ENCODE measurements at regions of chr1 and their contacts with region 1.

Region 1: DNA sequence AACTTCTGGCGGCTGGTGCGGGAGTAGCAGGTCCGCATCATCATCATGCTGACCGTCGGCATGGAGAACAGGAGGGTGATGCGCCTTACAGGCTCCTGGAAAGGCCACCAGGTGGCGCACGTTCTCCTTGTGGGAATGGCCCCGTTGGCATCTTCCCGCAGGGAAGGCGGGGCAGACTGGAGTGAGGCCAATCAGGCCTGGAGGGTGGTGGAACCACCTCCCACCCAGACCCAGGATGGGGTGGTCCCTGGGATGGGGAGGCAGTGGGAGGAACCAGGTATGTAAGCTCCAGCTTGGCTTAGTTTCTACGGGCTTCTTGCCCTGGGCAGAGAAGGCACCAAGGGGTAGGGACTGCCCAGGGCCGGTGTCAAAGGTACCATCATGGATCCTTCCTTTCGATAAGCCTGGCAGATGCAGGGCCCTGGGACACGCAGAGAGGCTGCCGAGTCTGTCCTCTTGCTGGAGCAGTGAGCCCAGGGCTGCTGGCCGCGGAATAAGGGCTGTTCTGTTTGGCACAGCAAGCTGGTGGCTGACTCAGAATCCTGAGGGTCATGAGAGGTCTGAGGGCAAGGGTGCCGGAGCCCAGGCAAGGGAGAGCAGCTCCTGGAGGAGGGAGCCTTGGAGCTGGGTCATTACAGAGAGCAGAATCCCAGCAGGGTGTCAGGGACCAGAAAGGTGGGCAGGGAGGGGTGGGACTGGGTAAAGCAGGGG is 8.7 kb upstream of the LGR6 start:
- DNase-seq: peak; percentile 57 to 62
- H3K4me3 ChIP-seq: no peak overlapping the region
- H3K27ac ChIP-seq: no peak overlapping the region
- H3K4me1 ChIP-seq: no peaks in the 10 kb centered on the region
- H3K27me3 ChIP-seq: no peaks in the 10 kb centered on the region
- CTCF ChIP-seq: peak; percentile 51 to 64 (median 56)
- POLR2A ChIP-seq: no peak

Region 2: GRCh38 chr1:201982623-201983379 is 202.1 kb before region 1 on chr1 and contains the start of gene RNPEP:
- intact Hi-C with region 1: no loop called
- DNase-seq: peak; percentile 77 to 80
- H3K4me3 ChIP-seq: peak within 1 kb of the TSS; percentile 72 to 100
- H3K27ac ChIP-seq: peak within 1 kb of the TSS; percentile 92 to 98
- H3K4me1 ChIP-seq: no peaks in the 10 kb centered on the region
- H3K27me3 ChIP-seq: no peaks in the 10 kb centered on the region
- CTCF ChIP-seq: peak in 2 of 4 experiments; percentile 27 to 31
- POLR2A ChIP-seq: peak; percentile 62 to 86
- total RNA-seq, gene RNPEP: 17.9 to 64.8 (median 41.7) TPM

Region 3: DNA sequence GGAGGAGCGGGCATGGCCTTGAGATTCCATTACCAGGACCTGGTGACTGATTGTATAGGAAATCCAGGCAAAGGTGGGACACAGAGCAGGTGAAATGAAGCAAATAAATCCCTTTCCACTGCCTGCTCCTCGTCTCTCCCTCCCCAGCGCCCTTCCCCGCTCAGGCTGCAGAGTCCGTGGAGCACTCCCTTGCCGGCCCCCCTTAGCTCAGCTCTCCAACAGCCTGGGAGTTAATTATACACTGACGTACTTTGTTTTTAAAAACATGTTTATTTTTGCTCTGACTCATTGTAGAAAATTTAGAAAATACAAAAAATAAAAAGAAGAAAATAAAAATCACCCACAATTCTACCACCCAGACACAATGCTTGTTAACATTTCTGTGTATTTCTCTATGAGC is 70.4 kb after region 1 on chr1:
- intact Hi-C with region 1: no loop called
- DNase-seq: no peak
- H3K4me3 ChIP-seq: no peak overlapping the region
- H3K27ac ChIP-seq: no peak overlapping the region
- H3K4me1 ChIP-seq: no peaks in the 10 kb centered on the region
- H3K27me3 ChIP-seq: no peaks in the 10 kb centered on the region
- CTCF ChIP-seq: no peak
- POLR2A ChIP-seq: no peak

Region 4: GRCh38 chr1:202716654-202717053 is 531.7 kb after region 1 on chr1:
- intact Hi-C with region 1: loop called (anchors 5 kb)
- DNase-seq: no peak
- H3K4me3 ChIP-seq: no peak overlapping the region
- H3K27ac ChIP-seq: no peak overlapping the region
- H3K4me1 ChIP-seq: no peaks in the 10 kb centered on the region
- H3K27me3 ChIP-seq: no peaks in the 10 kb centered on the region
- CTCF ChIP-seq: no peak
- POLR2A ChIP-seq: no peak